Posterior vena cava (tissue), 2 donors: ENCODE measurements at regions of chr14 and their contacts with region 1.

Region 1: GRCh38 chr14:95075789-95076188 is 81.5 kb downstream of the DICER1 start:
- DNase-seq: no peak

Region 2: DNA sequence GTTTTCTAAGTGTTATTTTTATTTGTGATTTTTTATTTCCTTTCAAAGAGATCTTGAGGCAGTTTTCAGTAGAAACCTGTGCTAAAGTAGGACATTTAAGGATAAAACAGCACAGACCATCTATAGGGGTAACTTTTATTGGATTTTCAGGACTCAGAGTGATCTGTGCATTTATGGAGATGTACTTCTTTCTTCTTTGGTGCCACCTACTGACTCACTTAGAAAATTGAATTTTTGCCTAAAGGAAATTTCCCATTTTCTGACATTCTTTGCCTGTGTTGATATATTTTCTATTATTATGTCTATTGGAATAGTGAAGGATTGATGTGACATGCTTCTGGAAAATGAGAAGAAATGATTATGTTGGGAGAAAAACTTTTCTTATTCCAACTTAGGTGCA is 1532.0 kb before region 1 on chr14:
- intact Hi-C with region 1: no loop called
- DNase-seq: no peak

Region 3: DNA sequence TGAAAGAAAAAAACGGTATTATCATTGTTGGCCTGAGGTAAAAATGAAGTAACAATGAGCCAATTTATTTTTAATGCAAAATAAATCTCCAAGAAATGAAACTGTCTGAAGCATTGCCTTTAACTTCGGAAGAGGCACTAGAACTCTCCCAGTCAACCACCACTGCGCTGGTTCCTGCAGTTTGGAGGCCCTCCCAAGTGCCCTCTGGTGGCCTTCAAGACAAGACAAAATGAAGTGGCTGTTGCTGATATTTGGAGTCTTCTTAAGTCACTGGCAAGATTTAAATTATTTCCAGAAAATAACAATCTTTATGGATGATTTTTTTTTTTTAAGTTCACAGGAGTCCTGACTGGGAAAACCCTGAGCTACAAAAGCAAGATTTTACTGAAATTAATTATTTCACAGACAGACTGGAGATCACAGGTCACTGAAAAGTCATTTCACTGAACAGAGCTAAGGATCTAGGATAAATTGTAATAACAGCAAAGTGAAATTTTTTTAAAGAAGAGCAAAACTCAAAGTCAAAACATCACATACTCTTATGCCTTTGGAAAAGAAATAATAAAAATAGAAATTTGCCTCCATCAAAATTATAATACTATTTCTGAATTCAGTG is 23.3 kb after region 1 on chr14:
- intact Hi-C with region 1: loop called in 1 of 2 experiments (anchors 1 kb)
- DNase-seq: peak; percentile 87